Panc1 (cell line): ENCODE measurements at regions of chr19 and their contacts with region 1.

Region 1: DNA sequence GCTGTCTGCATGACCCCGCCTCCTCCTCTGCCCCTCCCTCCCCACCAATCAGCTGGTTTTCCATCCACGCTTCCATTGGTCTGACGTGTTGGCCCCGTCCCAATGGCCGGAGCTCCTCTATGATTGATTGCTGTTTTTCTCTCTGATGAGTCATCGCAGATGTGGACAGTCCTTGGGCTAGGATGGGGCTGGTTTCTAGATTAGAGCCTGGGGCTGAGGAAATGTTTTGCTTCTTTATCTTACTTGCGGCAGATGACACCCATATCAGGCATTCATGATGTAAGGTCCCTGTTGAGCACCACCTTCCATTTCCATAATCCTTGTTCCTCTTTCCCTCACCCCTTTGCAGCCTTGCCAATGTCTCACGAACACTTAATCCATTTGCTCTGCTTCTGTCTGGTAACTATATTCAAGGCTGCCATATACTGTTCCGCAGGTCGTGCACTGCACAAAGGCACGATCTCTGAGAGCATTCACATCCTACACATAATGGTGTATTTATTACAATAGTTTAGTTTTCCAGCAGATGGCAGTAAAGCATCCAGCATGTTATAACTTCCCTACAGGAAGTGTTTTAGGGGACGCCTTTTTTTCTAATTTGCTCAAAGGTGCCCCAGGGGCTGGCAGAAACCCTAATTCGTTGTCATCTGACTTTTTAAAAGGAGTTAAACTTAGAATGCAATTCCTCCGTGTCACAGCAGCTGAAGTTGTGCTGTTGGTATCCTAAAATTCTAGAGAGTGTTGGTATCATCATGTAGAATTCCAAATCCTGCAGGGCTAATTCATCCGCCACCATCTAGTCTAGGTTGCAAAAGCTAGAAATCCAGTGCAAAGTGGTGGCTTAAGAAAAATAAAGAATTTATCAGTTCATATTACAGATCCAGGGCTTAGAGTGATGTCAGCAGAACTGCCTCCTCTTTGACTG is 73.5 kb downstream of the MAP4K1 start:
- DNase-seq: peak; percentile 95
- ATAC-seq: peak; percentile 93
- H3K4me3 ChIP-seq: peak overlapping the region; percentile 25 to 50
- H3K27ac ChIP-seq: peak overlapping the region; percentile 32
- H3K4me1 ChIP-seq: peaks cover 15% of the 10 kb centered on the region
- H3K27me3 ChIP-seq: peaks cover 3% of the 10 kb centered on the region; the same call in 1 of the 2 replicates
- CTCF ChIP-seq: no peak

Region 2: GRCh38 chr19:38441657-38442348 is 102.5 kb before region 1 on chr19:
- CTCF ChIA-PET with region 1: no interaction called
- POLR2A ChIA-PET with region 1: no interaction called
- in situ Hi-C with region 1: no loop called
- intact Hi-C with region 1: no loop called
- DNase-seq: no peak
- ATAC-seq: peak; percentile 75
- H3K4me3 ChIP-seq: no peak overlapping the region
- H3K27ac ChIP-seq: no peak overlapping the region
- H3K4me1 ChIP-seq: no peaks in the 10 kb centered on the region
- H3K27me3 ChIP-seq: no peaks in the 10 kb centered on the region
- CTCF ChIP-seq: no peak

Region 3: GRCh38 chr19:38478273-38478967 is 65.9 kb before region 1 on chr19:
- CTCF ChIA-PET with region 1: no interaction called
- POLR2A ChIA-PET with region 1: no interaction called
- in situ Hi-C with region 1: no loop called
- intact Hi-C with region 1: no loop called
- DNase-seq: no peak
- ATAC-seq: peak; percentile 91
- H3K4me3 ChIP-seq: no peak overlapping the region
- H3K27ac ChIP-seq: no peak overlapping the region
- H3K4me1 ChIP-seq: no peaks in the 10 kb centered on the region
- H3K27me3 ChIP-seq: no peaks in the 10 kb centered on the region
- CTCF ChIP-seq: no peak; the same call in 1 of the 2 replicates

Region 4: GRCh38 chr19:38583219-38583984 is 39.1 kb after region 1 on chr19:
- CTCF ChIA-PET with region 1: no interaction called
- POLR2A ChIA-PET with region 1: no interaction called
- in situ Hi-C with region 1: no loop called
- intact Hi-C with region 1: no loop called
- DNase-seq: no peak
- ATAC-seq: peak; percentile 62
- H3K4me3 ChIP-seq: no peak overlapping the region
- H3K27ac ChIP-seq: no peak overlapping the region
- H3K4me1 ChIP-seq: no peaks in the 10 kb centered on the region
- H3K27me3 ChIP-seq: no peaks in the 10 kb centered on the region
- CTCF ChIP-seq: no peak

Region 5: DNA sequence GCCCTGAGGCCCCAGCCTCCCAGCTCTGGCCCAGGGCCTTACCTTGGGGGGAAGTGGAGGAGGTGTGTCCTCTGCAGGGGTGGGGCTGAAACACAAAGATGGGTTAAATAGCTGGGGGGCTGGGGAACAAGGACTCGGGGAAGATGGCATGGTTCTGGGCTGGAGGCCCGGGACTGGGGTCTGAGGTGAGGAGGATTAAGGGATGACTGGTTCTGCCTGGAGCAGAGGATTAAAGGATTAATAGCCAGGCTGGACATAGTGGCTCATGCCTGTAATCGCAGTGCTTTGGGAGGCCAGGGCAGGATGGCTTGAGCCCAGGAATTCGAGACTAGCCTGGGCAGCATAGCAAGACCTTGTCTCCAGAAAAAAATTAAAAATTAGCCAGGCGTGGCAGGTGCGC is 61.8 kb after region 1 on chr19:
- CTCF ChIA-PET with region 1: interaction called, 10 read pairs
- POLR2A ChIA-PET with region 1: no interaction called
- in situ Hi-C with region 1: no loop called
- intact Hi-C with region 1: no loop called
- DNase-seq: no peak
- ATAC-seq: peak; percentile 35
- H3K4me3 ChIP-seq: no peak overlapping the region
- H3K27ac ChIP-seq: no peak overlapping the region
- H3K4me1 ChIP-seq: no peaks in the 10 kb centered on the region
- H3K27me3 ChIP-seq: no peaks in the 10 kb centered on the region
- CTCF ChIP-seq: no peak

Region 6: GRCh38 chr19:38723990-38724854 is 179.9 kb after region 1 on chr19:
- CTCF ChIA-PET with region 1: interaction called, 14 read pairs
- POLR2A ChIA-PET with region 1: interaction called, 7 read pairs
- in situ Hi-C with region 1: no loop called
- intact Hi-C with region 1: no loop called
- DNase-seq: no peak
- ATAC-seq: no peak
- H3K4me3 ChIP-seq: no peak overlapping the region
- H3K27ac ChIP-seq: peak overlapping the region; percentile 74; the same call in 1 of the 2 replicates
- H3K4me1 ChIP-seq: peaks cover 90% of the 10 kb centered on the region
- H3K27me3 ChIP-seq: no peaks in the 10 kb centered on the region
- CTCF ChIP-seq: no peak

Region 7: GRCh38 chr19:38831142-38831605 is 286.9 kb after region 1 on chr19:
- CTCF ChIA-PET with region 1: no interaction called
- POLR2A ChIA-PET with region 1: interaction called, 11 read pairs
- in situ Hi-C with region 1: no loop called
- intact Hi-C with region 1: no loop called
- DNase-seq: no peak
- ATAC-seq: peak; percentile 59
- H3K4me3 ChIP-seq: peak overlapping the region; percentile 51 to 78
- H3K27ac ChIP-seq: peak overlapping the region; percentile 97
- H3K4me1 ChIP-seq: peaks cover 55% of the 10 kb centered on the region
- H3K27me3 ChIP-seq: no peaks in the 10 kb centered on the region
- CTCF ChIP-seq: no peak

Region 8: GRCh38 chr19:39428283-39429112 is 884.2 kb after region 1 on chr19:
- CTCF ChIA-PET with region 1: no interaction called
- POLR2A ChIA-PET with region 1: no interaction called
- in situ Hi-C with region 1: no loop called
- intact Hi-C with region 1: no loop called
- DNase-seq: peak; percentile 92
- ATAC-seq: peak; percentile 70
- H3K4me3 ChIP-seq: peak overlapping the region; percentile 0 to 17; a peak in 3 of 4 replicates
- H3K27ac ChIP-seq: peak overlapping the region; percentile 86
- H3K4me1 ChIP-seq: peaks cover 75% of the 10 kb centered on the region
- H3K27me3 ChIP-seq: no peaks in the 10 kb centered on the region
- CTCF ChIP-seq: no peak

Region 9: DNA sequence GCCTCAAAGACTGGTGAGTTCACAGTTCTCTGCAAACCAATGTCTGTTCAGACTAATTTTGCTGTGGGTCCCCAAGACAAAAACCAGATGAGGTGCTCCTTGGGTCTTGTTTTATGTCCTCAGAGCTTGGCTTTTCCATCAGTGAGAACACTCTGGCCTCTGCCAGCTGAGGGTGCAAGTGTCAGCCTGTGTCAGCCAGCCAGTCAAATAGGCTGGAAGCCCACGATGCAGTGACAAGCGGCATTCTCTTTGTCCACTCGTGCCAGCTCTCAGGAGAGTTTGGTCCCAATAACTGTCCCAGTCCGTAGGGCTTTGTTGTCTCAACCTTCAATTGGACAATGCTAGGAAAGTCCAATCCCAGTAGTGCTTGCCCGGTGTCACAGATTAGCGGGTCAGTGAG is 1750.3 kb after region 1 on chr19:
- CTCF ChIA-PET with region 1: no interaction called
- POLR2A ChIA-PET with region 1: no interaction called
- in situ Hi-C with region 1: loop called (anchors 10 kb)
- intact Hi-C with region 1: no loop called
- DNase-seq: no peak
- ATAC-seq: peak; percentile 4
- H3K4me3 ChIP-seq: no peak overlapping the region
- H3K27ac ChIP-seq: no peak overlapping the region
- H3K4me1 ChIP-seq: no peaks in the 10 kb centered on the region
- H3K27me3 ChIP-seq: peaks cover 4% of the 10 kb centered on the region; the same call in 1 of the 2 replicates
- CTCF ChIP-seq: no peak